AG04450 (cell line): ENCODE measurements at regions of chr7 and their contacts with region 1.

Region 1: GRCh38 chr7:78134256-78134655 is 335.7 kb downstream of the PHTF2 start:
- DNase-seq: peak; percentile 39
- H3K4me3 ChIP-seq: no peak overlapping the region
- H3K27ac ChIP-seq: no peak overlapping the region
- H3K27me3 ChIP-seq: no peaks in the 10 kb centered on the region
- CTCF ChIP-seq: peak; percentile 70

Region 2: GRCh38 chr7:78172138-78172778 is 38.0 kb after region 1 on chr7:
- CTCF ChIA-PET with region 1: interaction called, 11 read pairs
- POLR2A ChIA-PET with region 1: no interaction called
- DNase-seq: no peak
- H3K4me3 ChIP-seq: no peak overlapping the region
- H3K27ac ChIP-seq: no peak overlapping the region
- H3K27me3 ChIP-seq: no peaks in the 10 kb centered on the region
- CTCF ChIP-seq: no peak

Region 3: GRCh38 chr7:78226059-78226719 is 91.9 kb after region 1 on chr7:
- CTCF ChIA-PET with region 1: interaction called, 16 read pairs
- POLR2A ChIA-PET with region 1: no interaction called
- DNase-seq: no peak
- H3K4me3 ChIP-seq: no peak overlapping the region
- H3K27ac ChIP-seq: no peak overlapping the region
- H3K27me3 ChIP-seq: no peaks in the 10 kb centered on the region
- CTCF ChIP-seq: peak; percentile 66

Region 4: DNA sequence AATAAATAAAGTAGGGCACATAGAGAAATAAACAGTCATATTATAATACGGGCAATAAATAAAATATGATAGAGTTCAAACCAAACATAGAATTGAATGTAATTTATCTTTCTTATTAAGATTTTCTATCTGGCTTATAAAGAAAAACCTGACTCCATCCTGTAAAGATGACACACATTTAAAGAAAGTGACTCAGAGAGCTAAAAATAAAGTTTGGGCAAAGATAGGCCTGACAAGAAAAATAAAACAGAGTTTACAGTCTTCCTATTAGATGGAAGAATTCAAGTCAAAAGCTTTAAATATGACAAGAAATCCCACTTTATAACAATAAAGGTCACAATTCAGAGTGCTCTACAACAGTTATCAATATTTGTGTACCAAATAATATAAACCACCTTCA is 244.9 kb after region 1 on chr7:
- CTCF ChIA-PET with region 1: interaction called, 11 read pairs
- POLR2A ChIA-PET with region 1: no interaction called
- DNase-seq: peak; percentile 4
- H3K4me3 ChIP-seq: no peak overlapping the region
- H3K27ac ChIP-seq: no peak overlapping the region
- H3K27me3 ChIP-seq: no peaks in the 10 kb centered on the region
- CTCF ChIP-seq: no peak

Region 5: DNA sequence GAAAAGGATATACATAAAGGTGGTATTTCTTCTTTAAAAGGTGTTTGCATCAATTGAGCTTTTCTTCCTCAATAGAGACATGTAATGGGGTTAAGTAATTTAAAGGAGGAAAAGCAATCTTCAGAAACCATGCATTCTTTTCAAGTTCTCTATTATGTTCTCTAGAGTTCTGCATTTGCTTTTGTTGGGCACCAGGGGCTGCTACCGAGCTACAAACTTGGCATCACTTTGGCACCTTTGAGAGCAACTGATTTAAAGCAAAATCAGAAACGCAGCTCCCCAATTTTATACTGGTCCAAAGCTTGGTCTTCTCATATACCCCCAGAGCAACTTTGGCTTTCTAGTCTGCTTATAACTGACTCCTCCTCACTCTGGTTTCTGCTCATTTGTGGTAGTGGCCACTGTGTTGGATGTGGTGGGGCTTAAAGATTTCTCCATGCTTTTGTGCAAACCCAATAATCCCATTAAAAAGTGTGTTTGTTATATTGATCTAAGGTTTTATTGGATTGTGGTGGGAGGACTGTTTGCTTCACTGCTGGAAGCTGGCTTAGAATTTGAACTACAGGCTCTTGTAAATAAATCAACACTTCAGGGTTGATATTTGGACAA is 376.4 kb after region 1 on chr7:
- CTCF ChIA-PET with region 1: interaction called, 12 read pairs
- POLR2A ChIA-PET with region 1: no interaction called
- DNase-seq: peak; percentile 29
- H3K4me3 ChIP-seq: no peak overlapping the region
- H3K27ac ChIP-seq: no peak overlapping the region
- H3K27me3 ChIP-seq: no peaks in the 10 kb centered on the region
- CTCF ChIP-seq: peak; percentile 95

Region 6: DNA sequence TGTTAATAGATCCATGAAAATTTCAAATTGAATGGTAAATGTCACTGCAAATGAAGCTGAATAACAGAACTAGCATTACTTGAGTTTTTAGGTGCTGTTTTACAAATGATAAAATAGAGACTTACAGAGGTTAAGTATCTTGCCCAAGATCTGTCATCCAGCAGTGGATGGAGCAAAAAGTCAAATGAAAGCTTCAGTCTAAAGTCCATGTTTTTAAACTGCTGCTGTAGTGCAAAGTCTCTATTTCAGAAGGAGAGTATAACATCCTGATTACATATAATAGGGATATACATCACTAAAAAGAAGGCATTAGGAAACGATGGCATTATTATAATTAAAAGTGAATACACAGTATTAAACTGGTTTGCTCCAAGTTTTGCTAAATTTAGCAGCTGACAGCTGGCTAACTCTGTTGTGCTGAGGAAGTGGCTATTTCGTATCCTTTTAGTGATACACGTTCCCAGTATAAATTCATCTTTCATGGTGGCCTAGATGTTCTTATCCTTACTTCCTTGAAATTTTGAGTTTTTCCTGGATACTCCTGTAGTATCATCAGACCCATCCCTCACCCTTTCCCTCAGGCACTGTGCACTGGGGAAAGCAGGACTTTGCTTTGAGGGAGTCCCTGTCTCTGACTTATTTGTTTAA is 716.0 kb after region 1 on chr7:
- CTCF ChIA-PET with region 1: no interaction called
- POLR2A ChIA-PET with region 1: no interaction called
- DNase-seq: no peak
- H3K4me3 ChIP-seq: no peak overlapping the region
- H3K27ac ChIP-seq: no peak overlapping the region
- H3K27me3 ChIP-seq: no peaks in the 10 kb centered on the region
- CTCF ChIP-seq: no peak

Region 7: DNA sequence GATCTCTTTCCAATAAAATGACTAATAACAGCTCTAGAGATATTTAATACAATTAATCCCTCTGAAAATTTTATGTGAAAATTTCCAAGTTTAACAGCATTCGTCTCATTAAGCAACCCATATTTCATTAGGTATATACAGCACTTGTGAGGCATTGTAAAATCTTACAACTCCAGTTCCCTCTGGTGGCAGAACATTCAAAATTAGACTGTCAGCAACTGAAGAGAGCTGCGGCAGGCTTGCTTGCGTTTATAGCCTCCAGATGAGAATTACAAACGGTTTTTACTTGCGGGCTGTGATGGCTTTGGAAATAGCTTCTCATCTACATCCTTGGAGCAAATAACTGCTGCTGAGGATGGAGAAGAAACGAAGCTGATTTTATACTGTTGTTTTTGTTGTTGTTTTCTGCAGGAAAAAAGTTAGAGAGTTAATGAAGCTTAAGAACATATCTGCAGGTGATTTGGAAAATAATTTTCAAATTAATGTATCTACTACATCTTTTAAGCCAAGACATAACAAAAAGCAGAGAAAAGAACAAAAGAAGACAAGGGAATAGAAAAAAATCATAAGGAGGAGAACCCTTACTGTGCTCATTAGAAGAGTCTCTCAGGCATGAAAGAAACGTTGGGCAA is 1147.9 kb after region 1 on chr7:
- CTCF ChIA-PET with region 1: interaction called, 10 read pairs
- POLR2A ChIA-PET with region 1: no interaction called
- DNase-seq: peak; percentile 39
- H3K4me3 ChIP-seq: peak overlapping the region; percentile 8; the same call in 1 of the 2 replicates
- H3K27ac ChIP-seq: peak overlapping the region; percentile 69
- H3K27me3 ChIP-seq: no peaks in the 10 kb centered on the region
- CTCF ChIP-seq: peak; percentile 62